Panc1 (cell line): ENCODE measurements at regions of chr2 and their contacts with region 1.

Region 1: GRCh38 chr2:231104115-231104713 is 20.6 kb downstream of the HTR2B start:
- DNase-seq: peak; percentile 63
- ATAC-seq: peak; percentile 87
- H3K4me3 ChIP-seq: no peak overlapping the region
- H3K27ac ChIP-seq: no peak overlapping the region
- H3K4me1 ChIP-seq: no peaks in the 10 kb centered on the region
- H3K27me3 ChIP-seq: no peaks in the 10 kb centered on the region
- CTCF ChIP-seq: peak; percentile 78; the same call in 1 of the 2 replicates

Region 2: DNA sequence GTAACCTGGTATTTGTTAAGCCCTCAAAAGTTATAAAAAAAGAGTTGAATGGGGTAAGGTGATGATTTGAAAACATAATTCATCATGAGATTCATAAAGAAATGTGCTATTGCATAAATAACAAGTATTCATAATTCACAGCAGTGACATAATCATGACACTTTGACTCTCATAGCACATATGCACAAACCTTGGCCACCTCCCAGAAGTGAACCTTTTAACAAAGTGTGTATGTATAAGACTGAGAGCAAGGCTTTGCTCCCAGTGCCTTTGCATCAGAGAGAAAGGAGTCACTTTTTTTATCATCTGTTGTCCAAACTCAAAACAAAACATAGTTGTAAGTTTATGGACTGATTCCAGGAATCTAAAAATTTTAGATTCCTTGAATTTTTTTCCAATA is 35.6 kb after region 1 on chr2:
- CTCF ChIA-PET with region 1: no interaction called
- POLR2A ChIA-PET with region 1: no interaction called
- in situ Hi-C with region 1: loop called (anchors 10 kb)
- intact Hi-C with region 1: no loop called
- DNase-seq: no peak
- ATAC-seq: no peak
- H3K4me3 ChIP-seq: no peak overlapping the region
- H3K27ac ChIP-seq: no peak overlapping the region
- H3K4me1 ChIP-seq: no peaks in the 10 kb centered on the region; the same call in none of the 2 replicates
- H3K27me3 ChIP-seq: no peaks in the 10 kb centered on the region
- CTCF ChIP-seq: no peak

Region 3: GRCh38 chr2:231198291-231199173 is 94.3 kb after region 1 on chr2 and contains the start of gene ARMC9:
- CTCF ChIA-PET with region 1: no interaction called
- POLR2A ChIA-PET with region 1: no interaction called
- in situ Hi-C with region 1: no loop called
- intact Hi-C with region 1: loop called (anchors 10 kb)
- DNase-seq: peak; percentile 35
- ATAC-seq: peak; percentile 97
- H3K4me3 ChIP-seq: peak within 1 kb of the TSS; percentile 83 to 94
- H3K27ac ChIP-seq: peak within 1 kb of the TSS; percentile 93
- H3K4me1 ChIP-seq: 0 out of 2 replicates have a peak, but pooled peaks cover 8% of the 10 kb centered on the region
- H3K27me3 ChIP-seq: no peaks in the 10 kb centered on the region
- CTCF ChIP-seq: no peak
- total RNA-seq, gene ARMC9: 42.7 TPM